CD8-positive, alpha-beta memory T cell (primary cell): ENCODE measurements at regions of chr5 and their contacts with region 1.

Region 1: GRCh38 chr5:179780362-179780761 is 13.4 kb upstream of the LTC4S start:
- DNase-seq: no peak
- H3K4me3 ChIP-seq: no peak overlapping the region
- H3K4me3 Mint-ChIP-seq: no peak overlapping the region
- H3K27ac ChIP-seq: no peak overlapping the region
- H3K27ac Mint-ChIP-seq: no peak overlapping the region
- H3K4me1 ChIP-seq: no peaks in the 10 kb centered on the region
- H3K4me1 Mint-ChIP-seq: no peaks in the 10 kb centered on the region
- H3K27me3 ChIP-seq: no peaks in the 10 kb centered on the region
- H3K27me3 Mint-ChIP-seq: peaks cover 0 to 1% of the 10 kb centered on the region in 2 donors

Region 2: GRCh38 chr5:179795863-179796833 is 15.8 kb after region 1 on chr5:
- CTCF ChIA-PET with region 1: interaction called, 10 read pairs
- POLR2A ChIA-PET with region 1: interaction called, 3 read pairs
- DNase-seq: peak; percentile 56 to 73 (median 63)
- H3K4me3 ChIP-seq: peak overlapping the region; percentile 47
- H3K4me3 Mint-ChIP-seq: peak overlapping the region; percentile 50 to 82 (median 67)
- H3K27ac ChIP-seq: no peak overlapping the region
- H3K27ac Mint-ChIP-seq: peak overlapping the region in 6 of 8 donors; percentile 50 to 96 (median 67)
- H3K4me1 ChIP-seq: peaks cover 28% of the 10 kb centered on the region
- H3K4me1 Mint-ChIP-seq: peaks cover 27 to 39% (median 28%) of the 10 kb centered on the region in 3 donors
- H3K27me3 ChIP-seq: no peaks in the 10 kb centered on the region
- H3K27me3 Mint-ChIP-seq: no peaks in the 10 kb centered on the region

Region 3: GRCh38 chr5:179818746-179819295 is 38.5 kb after region 1 on chr5:
- CTCF ChIA-PET with region 1: no interaction called
- POLR2A ChIA-PET with region 1: no interaction called
- DNase-seq: peak; percentile 74 to 95 (median 89)
- H3K4me3 ChIP-seq: peak overlapping the region; percentile 43
- H3K4me3 Mint-ChIP-seq: peak overlapping the region; percentile 77 to 94 (median 84)
- H3K27ac ChIP-seq: peak overlapping the region; percentile 96
- H3K27ac Mint-ChIP-seq: peak overlapping the region; percentile 86 to 98 (median 94)
- H3K4me1 ChIP-seq: peaks cover 36% of the 10 kb centered on the region
- H3K4me1 Mint-ChIP-seq: peaks cover 39 to 58% (median 39%) of the 10 kb centered on the region in 3 donors
- H3K27me3 ChIP-seq: no peaks in the 10 kb centered on the region
- H3K27me3 Mint-ChIP-seq: peaks cover 0 to 8% of the 10 kb centered on the region in 2 donors